ENCODE measurements at regions of chr3 and their contacts with region 1.

Region 1: DNA sequence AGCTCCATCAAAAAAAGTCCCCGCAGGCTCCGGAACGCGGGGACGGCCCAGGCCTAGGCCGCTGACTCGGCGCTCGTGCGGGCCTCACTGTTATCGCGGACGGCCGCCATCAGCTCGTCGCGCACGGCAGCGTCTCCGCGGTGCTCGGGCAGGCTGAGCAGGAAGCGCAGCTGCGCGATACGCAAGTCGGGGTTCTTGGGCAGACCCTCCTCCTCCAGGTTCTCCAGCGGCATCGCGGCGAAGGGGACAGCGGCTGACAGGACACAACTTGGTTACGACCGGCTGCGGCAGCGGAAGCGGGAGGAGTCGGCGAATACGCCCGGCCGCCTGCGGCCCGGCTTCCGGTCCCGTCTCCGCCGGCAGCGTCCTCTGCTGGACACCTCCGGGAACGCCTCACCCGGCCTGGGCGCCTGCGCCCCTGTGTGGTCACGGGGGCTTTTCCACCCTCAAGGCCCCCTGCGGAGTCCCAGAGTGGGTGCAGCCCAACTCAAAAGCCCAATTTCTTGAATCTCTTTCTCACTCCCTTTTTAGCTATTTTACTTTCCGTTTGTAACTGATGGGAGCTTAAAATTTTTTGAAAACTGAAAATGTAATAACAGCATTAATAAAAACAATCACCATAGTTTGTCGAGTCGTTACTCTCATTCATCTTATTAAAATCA is at the start of gene PSMD6:
- DNase-seq: peak; percentile 83 to 85 (median 83)
- H3K4me3 ChIP-seq: peak within 1 kb of the TSS; percentile 63 to 96 (median 79)
- H3K4me3 Mint-ChIP-seq: peak within 1 kb of the TSS; percentile 88 to 91
- H3K27ac ChIP-seq: peak within 1 kb of the TSS; percentile 74 to 96
- H3K27ac Mint-ChIP-seq: peak within 1 kb of the TSS; percentile 89 to 97 (median 92)
- H3K4me1 ChIP-seq: peaks cover 21 to 23% of the 10 kb centered on the region in 2 donors
- H3K4me1 Mint-ChIP-seq: peaks cover 25% of the 10 kb centered on the region
- H3K27me3 ChIP-seq: peaks cover 7 to 13% of the 10 kb centered on the region in 2 donors
- H3K27me3 Mint-ChIP-seq: peaks cover 5 to 14% (median 12%) of the 10 kb centered on the region in 3 donors
- CTCF ChIP-seq: peak; percentile 100
- polyA plus RNA-seq, gene PSMD6: 54.6 to 135 (median 101) TPM

Region 2: GRCh38 chr3:63863148-63864007 is 159.9 kb before region 1 on chr3 and contains the starts of genes ATXN7 and THOC7:
- intact Hi-C with region 1: loop called in 1 of 2 experiments (anchors 2 kb)
- DNase-seq: peak; percentile 36 to 60 (median 58)
- H3K4me3 ChIP-seq: peak within 1 kb of the TSS; percentile 90 to 93 (median 92)
- H3K4me3 Mint-ChIP-seq: peak within 1 kb of the TSS; percentile 96 to 97
- H3K27ac ChIP-seq: peak within 1 kb of the TSS; percentile 85 to 95
- H3K27ac Mint-ChIP-seq: peak within 1 kb of the TSS; percentile 89 to 97 (median 97)
- H3K4me1 ChIP-seq: peaks cover 22 to 26% of the 10 kb centered on the region in 2 donors
- H3K4me1 Mint-ChIP-seq: peaks cover 36% of the 10 kb centered on the region
- H3K27me3 ChIP-seq: no peaks in the 10 kb centered on the region
- H3K27me3 Mint-ChIP-seq: peaks cover 0 to 3% (median 3%) of the 10 kb centered on the region in 3 donors
- CTCF ChIP-seq: no peak
- polyA plus RNA-seq, gene ATXN7: 2.7 to 29.5 (median 3.2) TPM
- polyA plus RNA-seq, gene THOC7: 22.2 to 74.8 (median 70.1) TPM